ENCODE measurements at regions of chr11 and their contacts with region 1.

Region 1: GRCh38 chr11:128802358-128802981 is 64.6 kb downstream of the KCNJ1 start:
- DNase-seq: peak in 1 of 2 experiments; percentile 67
- H3K4me3 ChIP-seq: no peak overlapping the region
- H3K27ac ChIP-seq: no peak overlapping the region
- H3K4me1 ChIP-seq: no peaks in the 10 kb centered on the region
- H3K27me3 ChIP-seq: no peaks in the 10 kb centered on the region
- CTCF ChIP-seq: peak; percentile 57 to 83 (median 77)
- EP300 ChIP-seq: no peak
- POLR2A ChIP-seq: no peak
- RAD21 ChIP-seq: peak; percentile 59 to 78

Region 2: GRCh38 chr11:128790196-128790595 is 12.3 kb before region 1 on chr11:
- CTCF ChIA-PET with region 1: interaction called, 11 read pairs
- POLR2A ChIA-PET with region 1: interaction called, 4 read pairs
- DNase-seq: no peak
- H3K4me3 ChIP-seq: no peak overlapping the region
- H3K27ac ChIP-seq: no peak overlapping the region
- H3K4me1 ChIP-seq: peaks cover 0 to 9% (median 2%) of the 10 kb centered on the region in 4 experiments; a peak in 3 of 7 replicates
- H3K27me3 ChIP-seq: no peaks in the 10 kb centered on the region
- CTCF ChIP-seq: no peak
- EP300 ChIP-seq: no peak
- POLR2A ChIP-seq: no peak
- RAD21 ChIP-seq: no peak

Region 3: DNA sequence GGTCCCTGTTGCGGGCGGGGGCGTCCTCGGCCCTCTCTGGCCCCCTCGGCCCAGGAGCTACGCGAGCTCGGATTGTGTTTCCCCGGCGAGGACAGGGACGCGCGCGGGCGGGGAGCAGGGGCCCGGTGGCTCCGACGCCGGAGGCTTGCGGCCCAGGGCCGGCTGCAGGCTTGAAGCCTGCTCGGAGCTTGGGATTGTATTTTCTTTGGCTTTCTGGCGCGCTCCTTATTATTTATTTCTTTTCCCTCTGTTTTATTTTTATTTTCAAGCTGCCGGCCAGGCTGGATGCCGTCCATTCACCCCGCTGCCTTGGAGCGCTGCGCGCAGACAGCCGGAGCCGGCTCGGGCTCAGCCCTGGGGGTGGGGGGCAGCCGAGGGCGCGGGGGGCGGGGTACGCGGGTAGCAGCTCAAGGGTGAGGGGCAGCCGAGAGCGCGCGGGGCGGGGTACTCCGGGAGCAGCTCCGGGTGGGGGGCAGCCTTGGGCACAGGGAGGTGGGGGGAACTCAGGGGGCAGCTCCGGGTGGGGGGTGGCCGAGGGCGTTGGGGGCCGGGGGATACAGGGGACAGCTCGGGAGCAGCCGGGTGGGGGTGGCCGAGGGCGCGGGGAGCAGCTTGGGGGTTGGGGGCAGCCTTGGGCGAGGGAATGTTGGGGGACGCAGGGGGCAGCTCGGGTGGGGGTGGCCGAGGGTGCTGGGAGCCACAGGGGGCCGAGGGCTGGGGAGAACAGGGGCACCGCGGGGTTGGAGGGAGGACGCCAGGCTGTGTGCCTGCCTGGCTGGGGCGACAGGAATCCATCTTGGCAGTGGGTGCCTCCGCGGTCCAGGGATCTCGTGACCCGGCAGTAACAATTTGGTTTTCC is 21.9 kb after region 1 on chr11:
- CTCF ChIA-PET with region 1: interaction called, 17 read pairs
- POLR2A ChIA-PET with region 1: no interaction called
- DNase-seq: peak in 1 of 2 experiments; percentile 53
- H3K4me3 ChIP-seq: peak overlapping the region; percentile 18 to 61 (median 36); a peak in 6 of 8 replicates
- H3K27ac ChIP-seq: no peak overlapping the region
- H3K4me1 ChIP-seq: peaks cover 0 to 9% (median 6%) of the 10 kb centered on the region in 4 experiments; a peak in 4 of 7 replicates
- H3K27me3 ChIP-seq: peaks cover 0 to 9% (median 7%) of the 10 kb centered on the region in 4 experiments; a peak in 4 of 7 replicates
- CTCF ChIP-seq: no peak
- EP300 ChIP-seq: no peak
- POLR2A ChIP-seq: no peak
- RAD21 ChIP-seq: no peak

Measured in H1 (cell line).